ENCODE measurements at regions of chr15 and their contacts with region 1.

Region 1: DNA sequence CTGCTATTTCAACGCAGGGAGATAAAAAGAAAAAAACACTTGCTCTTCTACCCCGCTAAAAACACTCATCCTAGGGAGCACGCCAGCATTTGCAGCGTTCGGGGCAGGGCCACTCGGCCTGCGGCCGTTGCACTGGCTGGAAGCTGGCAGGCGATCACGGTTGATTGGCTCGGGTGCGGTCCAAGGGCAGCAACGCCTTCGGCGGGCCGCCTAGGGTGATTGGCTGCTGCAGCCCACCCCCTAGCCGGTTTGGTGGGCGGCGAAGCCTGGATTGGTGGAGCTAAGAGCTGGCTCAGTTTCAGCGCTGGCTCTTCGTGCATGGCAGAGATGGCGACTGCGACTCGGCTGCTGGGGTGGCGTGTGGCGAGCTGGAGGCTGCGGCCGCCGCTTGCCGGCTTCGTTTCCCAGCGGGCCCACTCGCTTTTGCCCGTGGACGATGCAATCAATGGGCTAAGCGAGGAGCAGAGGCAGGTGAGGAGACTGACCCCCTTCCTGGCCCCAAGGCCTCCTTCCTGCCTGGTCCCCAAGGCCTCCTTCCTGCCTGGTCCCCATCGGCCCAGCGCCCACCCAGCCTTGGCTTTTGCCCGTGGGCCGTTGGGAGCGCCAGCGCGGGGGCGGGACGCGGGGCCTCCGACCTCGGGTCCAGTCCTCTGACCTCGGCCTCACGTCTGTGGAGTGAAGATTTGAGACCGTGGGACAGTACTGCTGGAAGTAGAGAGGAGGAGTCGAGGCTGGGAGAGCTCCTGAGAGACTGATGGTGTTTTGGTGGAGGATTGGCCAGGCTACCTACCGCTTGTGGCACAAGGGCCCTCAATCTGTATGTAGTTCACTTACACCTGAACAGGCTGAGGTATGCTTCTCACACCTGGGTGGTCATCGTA is at the start of gene IVD:
- DNase-seq: peak; percentile 93

Region 2: GRCh38 chr15:40366457-40367370 is 39.0 kb before region 1 on chr15:
- CTCF ChIA-PET with region 1: interaction called, 3 read pairs
- POLR2A ChIA-PET with region 1: interaction called, 11 read pairs
- DNase-seq: no peak

Region 3: DNA sequence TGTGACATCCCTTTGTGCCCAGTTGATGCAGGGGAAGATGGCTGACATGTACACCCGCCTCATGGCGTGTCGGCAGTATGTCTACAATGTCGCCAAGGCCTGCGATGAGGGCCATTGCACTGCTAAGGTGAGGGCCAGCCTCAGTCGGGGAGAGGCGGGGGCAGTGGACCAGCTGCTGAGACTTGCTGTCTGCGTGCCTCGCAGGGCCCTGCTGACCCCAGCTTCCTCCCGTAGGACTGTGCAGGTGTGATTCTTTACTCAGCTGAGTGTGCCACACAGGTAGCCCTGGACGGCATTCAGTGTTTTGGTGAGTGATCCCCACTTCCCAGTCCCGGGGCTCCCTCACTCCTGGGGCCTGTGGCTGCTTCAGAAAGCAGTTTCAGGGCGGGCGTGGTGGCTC is 10.3 kb after region 1 on chr15:
- CTCF ChIA-PET with region 1: no interaction called
- POLR2A ChIA-PET with region 1: interaction called, 15 read pairs
- DNase-seq: no peak

Region 4: DNA sequence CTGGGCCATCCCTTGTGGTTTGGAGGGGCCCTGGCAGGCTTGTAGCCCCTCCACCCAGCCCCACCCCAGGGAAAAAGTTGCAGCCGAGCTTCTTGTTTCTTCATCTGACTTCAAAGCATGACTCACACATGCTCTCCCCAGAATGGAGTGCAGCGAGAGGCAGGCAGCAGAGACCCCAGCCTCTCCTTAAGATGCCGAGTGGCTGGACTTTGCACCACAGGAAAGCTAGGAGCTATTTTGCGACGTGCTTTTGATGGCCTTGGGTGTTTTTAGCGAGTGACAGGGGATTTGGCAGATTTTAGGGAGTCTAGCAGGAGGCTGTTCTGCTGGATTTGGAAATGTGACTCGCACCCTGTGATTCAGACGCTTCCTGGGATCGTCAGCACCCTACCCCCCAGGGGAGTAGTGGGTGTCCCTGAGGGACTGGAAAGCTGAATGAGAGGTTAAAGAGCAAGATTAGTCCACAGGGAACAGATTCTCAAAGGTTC is 49.2 kb after region 1 on chr15:
- CTCF ChIA-PET with region 1: no interaction called
- POLR2A ChIA-PET with region 1: no interaction called
- DNase-seq: no peak